Heart left ventricle (tissue), 16 donors: ENCODE measurements at regions of chr14 and their contacts with region 1.

Region 1: GRCh38 chr14:87896393-87897380 is 96.3 kb downstream of the GALC start:
- DNase-seq: no peak
- ATAC-seq: peak in 2 of 4 donors; percentile 52 to 61
- H3K4me3 ChIP-seq: no peak overlapping the region
- H3K27ac ChIP-seq: no peak overlapping the region
- H3K4me1 ChIP-seq: no peaks in the 10 kb centered on the region
- H3K27me3 ChIP-seq: peaks cover 0 to 19% (median 0%) of the 10 kb centered on the region in 9 donors
- CTCF ChIP-seq: peak; percentile 57 to 89 (median 76)
- POLR2A ChIP-seq: no peak

Region 2: DNA sequence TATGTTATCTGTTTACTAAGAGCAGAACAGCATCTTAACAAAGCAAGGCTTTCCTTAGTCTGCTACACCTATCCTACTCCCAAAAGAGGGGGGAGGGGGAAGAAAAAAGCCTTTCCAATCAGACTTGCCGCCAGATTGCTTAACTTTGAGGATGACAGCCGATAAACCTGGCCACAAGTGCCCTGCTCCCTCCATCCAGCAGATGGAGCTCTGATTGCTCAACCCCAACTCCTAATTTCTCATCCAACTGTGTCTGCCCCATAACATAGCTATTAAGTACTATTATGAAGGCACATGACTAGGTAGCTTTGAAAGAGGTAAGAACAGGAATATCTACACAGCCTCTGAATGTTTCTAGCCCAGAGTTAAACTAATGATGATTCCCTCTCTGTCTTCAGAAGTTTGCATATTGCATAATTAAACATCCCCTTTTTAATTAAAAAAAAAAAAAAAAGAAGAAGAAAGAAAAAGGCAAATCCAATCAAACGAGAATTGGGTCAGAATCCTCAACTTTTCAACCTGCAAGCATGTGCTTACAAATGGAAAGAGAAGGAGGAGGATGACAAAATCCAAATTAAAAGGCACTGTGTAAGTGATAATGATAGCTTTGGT is 151.1 kb before region 1 on chr14:
- intact Hi-C with region 1: loop called in 8 of 10 experiments (anchors 2 to 10 kb)
- DNase-seq: no peak
- ATAC-seq: no peak
- H3K4me3 ChIP-seq: no peak overlapping the region
- H3K27ac ChIP-seq: no peak overlapping the region
- H3K4me1 ChIP-seq: no peaks in the 10 kb centered on the region
- H3K27me3 ChIP-seq: no peaks in the 10 kb centered on the region
- CTCF ChIP-seq: peak; percentile 26 to 68 (median 50)
- POLR2A ChIP-seq: no peak

Region 3: DNA sequence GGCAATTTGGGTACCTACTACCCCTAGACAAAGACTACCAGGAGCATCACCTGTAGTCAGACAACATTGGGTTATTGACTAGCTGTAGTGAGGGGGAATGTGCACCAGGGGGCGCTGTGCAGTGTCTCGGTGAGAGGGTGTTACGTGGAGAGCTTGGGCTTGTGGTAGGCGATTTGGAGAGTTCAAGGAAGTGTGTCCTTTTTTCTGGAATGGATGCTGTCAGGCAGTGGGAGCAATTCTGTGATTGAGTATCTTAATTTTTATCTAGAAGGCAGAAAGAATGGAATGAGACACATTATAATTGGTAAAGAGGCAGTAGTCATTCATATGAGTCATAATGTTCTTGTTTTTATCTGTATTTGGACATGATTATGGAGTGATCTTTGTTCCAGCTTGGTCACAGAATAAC is 91.4 kb before region 1 on chr14:
- intact Hi-C with region 1: loop called (anchors 1 to 5 kb)
- DNase-seq: peak in 3 of 5 donors; percentile 25 to 37 (median 34)
- ATAC-seq: peak in 3 of 4 donors; percentile 52 to 63 (median 55)
- H3K4me3 ChIP-seq: no peak overlapping the region
- H3K27ac ChIP-seq: peak overlapping the region in 1 of 12 donors; percentile 30
- H3K4me1 ChIP-seq: no peaks in the 10 kb centered on the region
- H3K27me3 ChIP-seq: no peaks in the 10 kb centered on the region
- CTCF ChIP-seq: peak; percentile 46 to 69 (median 60)
- POLR2A ChIP-seq: no peak

Region 4: DNA sequence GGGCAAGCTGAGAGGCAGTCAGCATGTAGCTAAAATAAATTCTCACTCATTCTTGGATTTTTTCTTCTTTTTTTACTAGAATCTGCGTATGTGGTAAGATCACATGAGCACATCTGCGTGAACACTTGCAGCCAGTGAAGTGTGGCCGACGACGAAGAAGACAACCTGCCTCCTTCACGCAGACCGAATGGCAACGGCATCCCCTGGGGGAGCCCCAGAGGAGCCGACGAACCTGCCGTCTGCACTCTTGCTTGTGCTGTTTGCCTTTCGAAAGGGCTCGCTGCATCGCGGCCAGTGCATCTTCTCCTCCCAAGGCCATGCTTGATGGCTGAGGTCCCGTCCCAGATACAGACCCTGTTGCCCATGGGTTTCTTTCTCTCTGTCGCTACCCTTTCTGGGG is 312.6 kb after region 1 on chr14:
- intact Hi-C with region 1: no loop called
- DNase-seq: no peak
- ATAC-seq: no peak
- H3K4me3 ChIP-seq: no peak overlapping the region
- H3K27ac ChIP-seq: no peak overlapping the region
- H3K4me1 ChIP-seq: peaks cover 0 to 3% (median 0%) of the 10 kb centered on the region in 12 donors
- H3K27me3 ChIP-seq: peaks cover 0 to 9% (median 0%) of the 10 kb centered on the region in 9 donors
- CTCF ChIP-seq: no peak
- POLR2A ChIP-seq: no peak